Activated B cell treated with CpG ODN at 0.5 μM for 24 hours (primary cell): ENCODE measurements at regions of chr6 and their contacts with region 1.

Region 1: DNA sequence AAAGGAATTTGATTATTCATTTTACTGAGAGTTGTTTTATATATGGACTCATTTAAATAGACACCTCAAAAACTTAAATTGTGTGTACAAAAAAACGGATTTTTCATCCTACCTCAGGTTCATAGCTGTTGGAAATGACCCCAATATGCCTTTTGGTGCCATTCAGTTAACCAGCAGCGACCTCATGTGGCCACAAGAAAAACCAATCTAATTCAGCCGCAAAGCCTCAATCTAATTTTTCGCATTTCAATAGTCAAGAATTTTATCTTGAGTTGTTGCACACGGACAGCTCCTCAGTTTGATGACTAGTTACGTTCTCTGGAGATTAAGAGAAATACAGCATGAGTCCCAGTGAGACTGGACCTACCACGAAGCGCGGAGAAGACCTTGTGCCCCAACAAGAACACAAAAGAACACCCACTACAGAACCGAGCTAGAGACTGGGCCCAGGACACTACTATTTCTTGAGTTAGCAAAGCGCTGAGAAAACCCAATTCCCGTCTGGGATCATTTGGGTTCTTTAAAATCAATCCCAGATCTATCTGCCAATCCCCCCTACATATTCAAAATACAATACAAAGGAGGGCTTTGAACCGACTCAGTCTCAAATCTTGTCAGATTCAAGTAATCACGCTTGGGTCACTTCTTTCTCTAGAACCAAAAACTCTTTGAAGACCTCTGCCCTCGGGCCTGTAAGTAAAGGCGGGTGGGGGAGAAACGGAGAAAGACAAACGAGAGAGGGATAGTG is 1.1 kb downstream of the TCP11 start:
- DNase-seq: peak; percentile 20
- ATAC-seq: no peak
- H3K4me3 Mint-ChIP-seq: peak overlapping the region; percentile 36
- H3K27ac Mint-ChIP-seq: no peak overlapping the region
- H3K4me1 Mint-ChIP-seq: peaks cover 17% of the 10 kb centered on the region
- H3K27me3 Mint-ChIP-seq: peaks cover 13% of the 10 kb centered on the region
- CTCF ChIP-seq: peak; percentile 59

Region 2: DNA sequence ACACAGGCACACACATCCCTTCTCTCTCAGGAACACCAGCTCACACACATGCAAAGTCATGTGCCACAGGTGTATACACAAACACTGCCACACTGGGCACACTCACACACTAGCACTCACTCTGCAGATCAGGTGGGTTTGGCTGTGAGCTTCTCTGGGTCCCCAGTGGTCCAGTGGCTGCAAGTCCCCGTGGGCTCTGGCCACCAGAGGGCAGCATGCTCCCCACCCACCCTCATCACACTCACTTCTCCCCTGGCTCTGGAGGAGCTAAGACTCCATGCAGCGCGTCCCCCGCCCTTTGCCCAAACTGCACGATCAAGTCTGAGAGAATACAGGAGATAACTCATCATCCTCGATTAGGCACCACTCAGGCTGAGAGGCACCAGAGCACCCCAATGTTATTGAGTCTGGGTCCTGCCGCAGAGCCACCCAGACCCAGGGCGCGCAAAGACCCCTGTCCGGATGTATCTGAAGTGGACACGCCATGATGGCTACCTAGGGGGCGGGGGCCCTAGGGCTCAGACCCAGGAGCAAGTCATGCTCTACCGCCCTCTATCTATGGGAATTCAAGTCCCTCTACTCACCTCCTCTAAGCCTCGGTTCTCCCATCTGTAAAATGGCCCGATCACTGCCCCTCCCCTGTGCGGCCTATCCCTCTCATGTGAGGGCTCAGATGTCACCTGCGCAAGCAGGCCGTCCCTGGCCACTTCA is 1084.7 kb before region 1 on chr6:
- CTCF ChIA-PET with region 1: interaction called, 3 read pairs
- POLR2A ChIA-PET with region 1: no interaction called
- intact Hi-C with region 1: loop called (anchors 1 kb)
- DNase-seq: peak; percentile 56
- ATAC-seq: peak; percentile 84
- H3K4me3 Mint-ChIP-seq: no peak overlapping the region
- H3K27ac Mint-ChIP-seq: no peak overlapping the region
- H3K4me1 Mint-ChIP-seq: no peaks in the 10 kb centered on the region
- H3K27me3 Mint-ChIP-seq: peaks cover 21% of the 10 kb centered on the region
- CTCF ChIP-seq: no peak

Region 3: DNA sequence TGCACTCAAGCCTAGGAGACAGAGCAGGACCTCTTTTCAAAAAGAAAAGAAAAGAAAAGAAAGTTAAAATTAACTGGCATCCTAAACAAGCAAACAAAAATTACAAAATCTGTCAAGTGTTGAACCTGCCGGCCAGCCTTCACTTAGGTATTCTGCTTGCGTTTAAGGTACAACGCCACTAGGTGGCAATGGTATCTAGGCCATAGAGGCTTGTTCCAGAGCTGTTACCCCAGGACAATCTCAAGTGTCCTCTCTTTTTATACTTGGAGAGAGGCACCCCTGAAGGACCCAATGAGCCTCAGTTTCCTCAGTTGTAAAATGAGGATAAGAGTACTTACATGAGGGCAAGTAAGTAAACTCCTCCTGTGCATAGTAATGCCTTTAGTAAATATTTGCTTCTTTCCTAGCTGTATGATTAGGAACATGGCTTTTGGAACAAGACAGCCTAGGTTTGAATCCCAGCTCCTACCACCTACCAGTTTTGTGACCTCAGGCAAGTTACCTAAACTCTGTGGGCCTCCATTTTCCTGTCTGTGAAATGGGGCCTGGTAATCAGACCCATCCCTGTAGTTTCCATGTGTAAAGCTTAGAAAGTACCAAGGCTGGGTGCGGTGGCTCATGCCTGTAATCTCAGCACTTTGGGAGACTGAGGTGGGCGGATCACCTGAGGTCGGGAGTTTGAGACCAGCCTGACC is 680.0 kb before region 1 on chr6:
- CTCF ChIA-PET with region 1: interaction called, 24 read pairs
- POLR2A ChIA-PET with region 1: no interaction called
- intact Hi-C with region 1: loop called (anchors 1 kb)
- DNase-seq: no peak
- ATAC-seq: peak; percentile 93
- H3K4me3 Mint-ChIP-seq: no peak overlapping the region
- H3K27ac Mint-ChIP-seq: no peak overlapping the region
- H3K4me1 Mint-ChIP-seq: peaks cover 1% of the 10 kb centered on the region
- H3K27me3 Mint-ChIP-seq: peaks cover 12% of the 10 kb centered on the region
- CTCF ChIP-seq: peak; percentile 19

Region 4: GRCh38 chr6:34791701-34792235 is 348.3 kb before region 1 on chr6 and contains the start of gene BLTP3A:
- CTCF ChIA-PET with region 1: interaction called, 4 read pairs
- POLR2A ChIA-PET with region 1: no interaction called
- intact Hi-C with region 1: loop called (anchors 10 kb)
- DNase-seq: peak; percentile 78
- ATAC-seq: peak; percentile 93
- H3K4me3 Mint-ChIP-seq: peak within 1 kb of the TSS; percentile 96
- H3K27ac Mint-ChIP-seq: peak within 1 kb of the TSS; percentile 93
- H3K4me1 Mint-ChIP-seq: peaks cover 24% of the 10 kb centered on the region
- H3K27me3 Mint-ChIP-seq: no peaks in the 10 kb centered on the region
- CTCF ChIP-seq: no peak
- total RNA-seq, gene BLTP3A: 10.8 and 12.6 TPM in 2 replicates

Region 5: DNA sequence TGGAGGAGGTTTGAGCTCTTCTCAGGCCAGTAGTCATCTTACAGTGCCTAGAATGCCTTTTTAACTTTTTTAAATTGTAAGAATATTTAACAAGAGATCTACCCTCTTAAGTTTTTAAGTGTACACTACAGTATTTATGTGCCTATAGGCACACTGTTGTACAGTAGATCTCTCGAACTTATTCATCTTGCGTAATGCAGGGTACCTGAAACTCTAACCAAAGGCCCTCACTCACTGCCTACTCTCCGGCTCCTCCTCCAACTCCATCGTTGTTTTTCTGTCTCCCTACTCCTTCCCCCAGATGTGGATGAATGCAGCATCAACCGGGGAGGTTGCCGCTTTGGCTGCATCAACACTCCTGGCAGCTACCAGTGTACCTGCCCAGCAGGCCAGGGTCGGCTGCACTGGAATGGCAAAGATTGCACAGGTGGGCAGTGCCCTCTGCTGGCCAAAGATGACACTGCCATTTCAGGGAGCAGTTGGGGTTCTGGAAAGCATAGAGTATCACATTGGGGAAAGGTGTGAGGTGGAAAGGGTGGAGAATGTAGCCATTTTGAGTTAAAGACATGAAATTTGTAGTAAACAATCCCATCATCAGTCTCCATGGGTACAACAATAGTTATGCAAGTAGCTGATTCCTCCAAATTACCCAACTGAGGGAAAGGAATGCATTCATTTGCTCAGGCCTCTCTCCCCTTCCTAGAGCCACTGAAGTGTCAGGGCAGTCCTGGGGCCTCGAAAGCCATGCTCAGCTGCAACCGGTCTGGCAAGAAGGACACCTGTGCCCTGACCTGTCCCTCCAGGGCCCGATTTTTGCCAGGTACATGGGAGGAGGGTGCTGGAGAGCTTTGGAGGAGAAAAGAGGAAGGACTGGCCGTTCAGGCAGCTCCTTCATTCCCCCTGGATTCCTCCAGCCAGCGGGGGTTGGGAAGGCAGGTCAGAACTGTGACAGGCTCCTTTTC is 101.0 kb after region 1 on chr6:
- CTCF ChIA-PET with region 1: interaction called, 3 read pairs
- POLR2A ChIA-PET with region 1: no interaction called
- intact Hi-C with region 1: loop called (anchors 2 kb)
- DNase-seq: peak; percentile 63
- ATAC-seq: peak; percentile 81
- H3K4me3 Mint-ChIP-seq: no peak overlapping the region
- H3K27ac Mint-ChIP-seq: no peak overlapping the region
- H3K4me1 Mint-ChIP-seq: no peaks in the 10 kb centered on the region
- H3K27me3 Mint-ChIP-seq: no peaks in the 10 kb centered on the region
- CTCF ChIP-seq: peak; percentile 100

Region 6: DNA sequence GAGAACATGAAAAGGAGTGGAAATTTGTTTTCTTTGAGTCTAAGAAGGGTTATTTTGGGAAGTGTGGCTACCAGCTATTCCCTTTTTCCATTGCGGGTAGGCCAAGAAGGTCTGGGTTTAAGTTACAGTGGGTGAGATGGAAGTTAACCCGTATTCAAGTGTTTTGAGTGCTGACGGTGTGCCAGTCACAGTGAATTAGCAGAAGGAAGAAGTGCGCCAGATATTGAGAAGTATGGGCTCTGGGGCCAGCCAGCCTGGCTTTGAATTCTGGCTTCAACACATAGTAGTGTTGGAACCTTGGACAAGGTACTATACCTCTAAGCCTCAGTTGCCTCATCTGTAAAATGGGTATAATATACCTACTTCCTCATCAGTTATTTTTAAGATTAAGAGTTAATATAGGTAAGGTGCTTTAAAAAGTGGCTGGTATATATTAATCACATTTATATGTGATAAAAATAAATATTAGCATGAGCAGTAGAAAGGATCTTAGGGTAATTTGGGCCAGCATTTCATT is 135.7 kb after region 1 on chr6:
- CTCF ChIA-PET with region 1: no interaction called
- POLR2A ChIA-PET with region 1: no interaction called
- intact Hi-C with region 1: no loop called
- DNase-seq: no peak
- ATAC-seq: no peak
- H3K4me3 Mint-ChIP-seq: no peak overlapping the region
- H3K27ac Mint-ChIP-seq: no peak overlapping the region
- H3K4me1 Mint-ChIP-seq: no peaks in the 10 kb centered on the region
- H3K27me3 Mint-ChIP-seq: no peaks in the 10 kb centered on the region
- CTCF ChIP-seq: no peak